CD4-positive, alpha-beta memory T cell (primary cell): ENCODE measurements at regions of chr6 and their contacts with region 1.

Region 1: DNA sequence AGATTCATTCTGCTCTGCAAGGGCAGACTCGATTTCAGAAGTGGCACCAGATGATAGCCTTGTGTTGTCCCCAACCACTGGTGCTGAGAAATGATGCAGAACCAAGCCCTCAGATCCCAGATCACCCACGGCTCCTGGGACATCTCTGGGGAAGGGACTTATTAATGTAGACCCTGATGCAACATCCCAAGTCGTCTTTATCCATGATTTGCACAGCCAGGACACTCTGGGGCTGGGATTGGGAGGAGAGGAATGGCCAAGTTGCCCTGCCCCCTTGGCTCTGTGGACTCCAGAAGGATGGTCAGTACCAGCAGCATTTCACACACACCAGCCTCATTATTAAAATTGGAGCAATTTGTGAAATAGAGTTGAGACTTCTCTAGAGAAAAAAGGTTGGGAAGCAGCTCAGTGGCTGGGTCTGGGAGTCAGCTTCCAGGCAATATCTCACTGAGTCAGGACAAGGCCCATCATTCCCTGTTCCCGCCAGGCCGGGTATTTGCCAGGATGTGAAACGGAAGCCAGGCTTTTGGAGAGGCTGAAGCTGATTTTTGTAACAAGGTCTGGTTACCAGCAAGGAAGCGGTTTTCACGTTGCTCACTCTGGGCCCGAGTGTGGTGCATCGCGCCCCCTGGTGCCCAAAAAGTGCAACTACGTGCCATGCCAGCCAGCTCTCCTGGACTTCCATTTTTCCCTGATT is 67.4 kb downstream of the ZBTB2 start:
- DNase-seq: peak; percentile 45 to 69 (median 66)
- H3K4me3 ChIP-seq: no peak overlapping the region
- H3K4me3 Mint-ChIP-seq: peak overlapping the region in 7 of 8 donors; percentile 59 to 87 (median 71)
- H3K27ac ChIP-seq: no peak overlapping the region
- H3K27ac Mint-ChIP-seq: peak overlapping the region in 1 of 7 donors; percentile 67
- H3K4me1 ChIP-seq: peaks cover 16% of the 10 kb centered on the region
- H3K4me1 Mint-ChIP-seq: peaks cover 11 to 25% (median 21%) of the 10 kb centered on the region in 4 donors
- H3K27me3 ChIP-seq: peaks cover 7% of the 10 kb centered on the region
- H3K27me3 Mint-ChIP-seq: peaks cover 25 to 46% of the 10 kb centered on the region in 2 donors

Region 2: DNA sequence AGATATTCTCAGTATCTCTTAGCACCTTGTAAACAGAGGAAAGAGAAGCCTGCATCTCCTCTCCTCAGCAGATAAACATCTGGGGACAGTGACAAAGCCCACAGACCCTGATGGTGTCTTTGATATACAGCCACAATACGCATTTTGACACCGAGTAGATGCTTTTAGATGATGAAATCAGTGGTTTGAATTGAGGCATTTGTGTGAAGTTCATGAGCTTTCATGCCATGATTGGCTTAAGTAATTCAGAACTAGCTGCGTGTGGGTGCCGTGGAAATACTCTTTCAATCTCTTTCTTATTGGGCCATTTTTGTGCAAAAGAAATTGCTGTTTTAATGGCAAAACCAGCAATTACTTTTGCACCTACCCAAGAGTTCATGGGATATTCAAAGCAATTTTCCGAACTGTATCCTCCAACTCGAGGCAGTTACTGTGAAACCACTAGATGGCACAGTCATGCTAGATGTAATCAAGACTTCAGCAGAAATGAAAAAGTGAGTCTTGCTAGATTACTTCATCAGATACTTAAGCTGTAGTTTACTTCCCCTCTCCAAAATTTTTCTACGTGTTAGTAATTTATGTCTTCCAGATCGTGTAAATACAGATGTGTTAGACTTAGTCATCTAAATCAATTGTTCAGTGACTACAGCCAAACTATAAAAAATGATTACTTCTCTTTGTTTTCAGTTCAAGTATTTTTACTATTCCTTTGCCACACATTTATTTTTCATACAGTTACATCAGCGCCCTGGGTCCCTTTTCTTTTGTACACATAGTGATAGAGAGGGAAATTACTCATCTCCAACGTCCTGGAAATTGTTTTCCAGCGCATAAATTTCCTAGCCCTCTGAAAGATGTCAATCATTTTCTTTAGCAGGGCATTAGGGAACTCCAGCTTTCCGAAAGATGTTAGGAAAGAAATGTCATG is 905.8 kb before region 1 on chr6:
- CTCF ChIA-PET with region 1: interaction called, 5 read pairs
- POLR2A ChIA-PET with region 1: no interaction called
- intact Hi-C with region 1: loop called (anchors 10 kb)
- DNase-seq: peak; percentile 44 to 53 (median 51)
- H3K4me3 ChIP-seq: peak overlapping the region; percentile 8 to 25
- H3K4me3 Mint-ChIP-seq: peak overlapping the region; percentile 69 to 89 (median 78)
- H3K27ac ChIP-seq: no peak overlapping the region
- H3K27ac Mint-ChIP-seq: peak overlapping the region in 2 of 7 donors; percentile 0 to 19
- H3K4me1 ChIP-seq: peaks cover 9% of the 10 kb centered on the region
- H3K4me1 Mint-ChIP-seq: peaks cover 4 to 22% (median 14%) of the 10 kb centered on the region in 4 donors
- H3K27me3 ChIP-seq: no peaks in the 10 kb centered on the region
- H3K27me3 Mint-ChIP-seq: peaks cover 12 to 21% of the 10 kb centered on the region in 2 donors

Region 3: DNA sequence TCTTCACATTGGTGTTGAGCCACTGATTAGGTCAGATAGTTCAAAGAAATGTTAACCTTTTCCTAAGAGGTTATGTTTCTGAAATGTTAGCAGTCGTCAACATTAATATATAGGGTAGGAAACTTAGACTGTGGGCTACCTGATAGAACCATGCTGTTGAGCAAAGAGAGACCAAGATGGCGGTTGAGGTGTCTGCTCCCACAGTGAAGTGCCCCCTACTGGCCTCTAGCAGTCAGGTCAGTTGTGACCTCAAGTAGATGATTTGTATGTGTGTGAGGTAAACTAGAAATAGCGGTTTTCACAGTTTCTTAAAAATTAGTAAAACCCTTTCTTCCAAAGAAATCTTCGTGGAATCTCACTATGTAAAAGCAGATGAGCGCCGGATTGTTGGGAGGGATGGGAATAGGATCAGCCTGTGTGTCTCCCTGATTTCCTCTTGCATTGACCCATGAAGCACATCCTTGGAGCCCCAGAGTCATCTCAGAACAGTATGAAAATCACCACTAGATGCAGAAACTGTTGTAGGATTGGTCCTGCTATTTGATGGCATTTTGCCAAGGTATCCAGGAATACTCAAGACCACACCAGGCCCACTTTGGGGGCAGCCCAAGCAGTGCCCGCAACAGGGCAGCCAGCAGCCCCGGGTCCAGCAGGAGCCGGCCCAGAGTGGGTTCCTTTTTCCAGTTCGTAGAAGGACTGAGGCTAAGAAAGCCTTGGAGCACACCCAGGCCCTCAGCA is 418.0 kb before region 1 on chr6:
- CTCF ChIA-PET with region 1: interaction called, 860 read pairs
- POLR2A ChIA-PET with region 1: no interaction called
- intact Hi-C with region 1: no loop called
- DNase-seq: no peak
- H3K4me3 ChIP-seq: no peak overlapping the region
- H3K4me3 Mint-ChIP-seq: no peak overlapping the region
- H3K27ac ChIP-seq: no peak overlapping the region
- H3K27ac Mint-ChIP-seq: no peak overlapping the region
- H3K4me1 ChIP-seq: no peaks in the 10 kb centered on the region
- H3K4me1 Mint-ChIP-seq: no peaks in the 10 kb centered on the region
- H3K27me3 ChIP-seq: no peaks in the 10 kb centered on the region
- H3K27me3 Mint-ChIP-seq: no peaks in the 10 kb centered on the region

Region 4: DNA sequence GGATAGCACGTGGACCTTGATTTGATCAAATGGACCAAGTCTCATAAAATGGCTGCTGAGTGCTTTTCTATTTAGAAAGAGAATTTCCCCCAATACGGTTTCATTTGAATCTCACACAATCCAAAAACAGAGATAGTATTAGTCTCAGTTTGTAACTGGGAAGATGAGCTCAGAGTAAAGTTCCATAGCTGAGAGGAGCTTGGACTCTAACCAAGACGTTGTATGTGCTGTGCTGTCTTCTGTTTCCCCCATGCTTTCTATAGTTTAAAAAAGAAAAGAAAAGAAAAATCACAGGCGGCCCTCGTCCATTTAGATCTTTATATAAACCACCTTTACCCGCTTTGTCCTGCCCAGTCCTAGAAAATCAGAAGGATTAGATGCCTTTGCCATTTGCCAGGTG is 26.1 kb before region 1 on chr6:
- CTCF ChIA-PET with region 1: interaction called, 10 read pairs
- POLR2A ChIA-PET with region 1: no interaction called
- intact Hi-C with region 1: no loop called
- DNase-seq: no peak
- H3K4me3 ChIP-seq: no peak overlapping the region
- H3K4me3 Mint-ChIP-seq: no peak overlapping the region
- H3K27ac ChIP-seq: no peak overlapping the region
- H3K27ac Mint-ChIP-seq: no peak overlapping the region
- H3K4me1 ChIP-seq: no peaks in the 10 kb centered on the region
- H3K4me1 Mint-ChIP-seq: no peaks in the 10 kb centered on the region
- H3K27me3 ChIP-seq: no peaks in the 10 kb centered on the region
- H3K27me3 Mint-ChIP-seq: peaks cover 16 to 25% of the 10 kb centered on the region in 2 donors

Region 5: GRCh38 chr6:151339369-151339768 is 15.4 kb after region 1 on chr6:
- CTCF ChIA-PET with region 1: interaction called, 76 read pairs
- POLR2A ChIA-PET with region 1: interaction called, 4 read pairs
- intact Hi-C with region 1: no loop called
- DNase-seq: no peak
- H3K4me3 ChIP-seq: no peak overlapping the region
- H3K4me3 Mint-ChIP-seq: no peak overlapping the region
- H3K27ac ChIP-seq: no peak overlapping the region
- H3K27ac Mint-ChIP-seq: no peak overlapping the region
- H3K4me1 ChIP-seq: no peaks in the 10 kb centered on the region
- H3K4me1 Mint-ChIP-seq: peaks cover 0 to 4% (median 3%) of the 10 kb centered on the region in 4 donors
- H3K27me3 ChIP-seq: no peaks in the 10 kb centered on the region
- H3K27me3 Mint-ChIP-seq: peaks cover 3 to 4% of the 10 kb centered on the region in 2 donors

Region 6: DNA sequence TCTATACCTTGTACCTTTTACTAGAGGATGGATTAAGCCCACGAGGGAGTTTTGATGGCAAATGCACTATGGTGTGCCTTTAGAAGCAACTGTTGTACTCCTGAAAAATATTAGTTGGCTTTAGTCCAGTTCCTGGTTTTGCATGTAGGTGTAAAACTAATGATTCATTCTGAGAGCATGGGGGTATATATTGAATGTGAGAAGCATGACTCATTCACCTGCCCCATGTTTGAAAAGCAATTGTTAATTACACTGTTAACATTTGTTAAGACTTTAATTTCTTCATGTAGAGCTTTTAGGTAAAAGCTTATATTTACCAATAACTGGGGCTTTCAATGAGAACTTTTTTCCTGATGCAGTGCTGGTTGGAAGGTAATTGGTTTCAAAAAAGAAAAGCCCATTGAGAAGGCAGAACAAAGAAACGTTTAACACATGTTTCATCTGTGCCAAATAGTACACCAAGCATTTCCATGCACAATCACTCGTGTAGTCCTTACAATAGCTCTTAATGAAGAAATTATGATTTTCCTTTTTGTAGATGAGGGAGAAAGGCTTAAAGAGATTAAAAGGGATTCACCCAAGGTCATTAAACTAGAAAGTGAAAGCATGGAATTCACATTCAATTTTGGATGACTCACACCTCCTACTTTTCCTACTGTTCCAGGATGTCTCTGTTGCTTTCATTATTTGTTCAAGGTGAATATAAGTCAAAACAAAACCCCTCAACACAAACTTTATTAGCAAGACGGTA is 303.9 kb after region 1 on chr6:
- CTCF ChIA-PET with region 1: no interaction called
- POLR2A ChIA-PET with region 1: no interaction called
- intact Hi-C with region 1: no loop called
- DNase-seq: no peak
- H3K4me3 ChIP-seq: no peak overlapping the region
- H3K4me3 Mint-ChIP-seq: no peak overlapping the region
- H3K27ac ChIP-seq: no peak overlapping the region
- H3K27ac Mint-ChIP-seq: no peak overlapping the region
- H3K4me1 ChIP-seq: no peaks in the 10 kb centered on the region
- H3K4me1 Mint-ChIP-seq: no peaks in the 10 kb centered on the region
- H3K27me3 ChIP-seq: no peaks in the 10 kb centered on the region
- H3K27me3 Mint-ChIP-seq: peaks cover 1 to 4% of the 10 kb centered on the region in 2 donors